PC-3 (cell line): ENCODE measurements at regions of chr12 and their contacts with region 1.

Region 1: GRCh38 chr12:15662303-15662980 is 126.7 kb downstream of the EPS8 start:
- DNase-seq: peak; percentile 91
- ATAC-seq: peak; percentile 94
- H3K4me3 ChIP-seq: no peak overlapping the region; the same call in 1 of the 2 replicates
- H3K27ac ChIP-seq: peak overlapping the region; percentile 97
- H3K4me1 ChIP-seq: peaks cover 30% of the 10 kb centered on the region
- H3K27me3 ChIP-seq: no peaks in the 10 kb centered on the region
- CTCF ChIP-seq: no peak

Region 2: GRCh38 chr12:15556411-15557102 is 105.9 kb before region 1 on chr12:
- CTCF ChIA-PET with region 1: no interaction called
- POLR2A ChIA-PET with region 1: interaction called, 17 read pairs
- intact Hi-C with region 1: no loop called
- DNase-seq: peak; percentile 5
- ATAC-seq: peak; percentile 63
- H3K4me3 ChIP-seq: no peak overlapping the region
- H3K27ac ChIP-seq: no peak overlapping the region
- H3K4me1 ChIP-seq: peaks cover 3% of the 10 kb centered on the region; the same call in 1 of the 2 replicates
- H3K27me3 ChIP-seq: no peaks in the 10 kb centered on the region
- CTCF ChIP-seq: no peak

Region 3: DNA sequence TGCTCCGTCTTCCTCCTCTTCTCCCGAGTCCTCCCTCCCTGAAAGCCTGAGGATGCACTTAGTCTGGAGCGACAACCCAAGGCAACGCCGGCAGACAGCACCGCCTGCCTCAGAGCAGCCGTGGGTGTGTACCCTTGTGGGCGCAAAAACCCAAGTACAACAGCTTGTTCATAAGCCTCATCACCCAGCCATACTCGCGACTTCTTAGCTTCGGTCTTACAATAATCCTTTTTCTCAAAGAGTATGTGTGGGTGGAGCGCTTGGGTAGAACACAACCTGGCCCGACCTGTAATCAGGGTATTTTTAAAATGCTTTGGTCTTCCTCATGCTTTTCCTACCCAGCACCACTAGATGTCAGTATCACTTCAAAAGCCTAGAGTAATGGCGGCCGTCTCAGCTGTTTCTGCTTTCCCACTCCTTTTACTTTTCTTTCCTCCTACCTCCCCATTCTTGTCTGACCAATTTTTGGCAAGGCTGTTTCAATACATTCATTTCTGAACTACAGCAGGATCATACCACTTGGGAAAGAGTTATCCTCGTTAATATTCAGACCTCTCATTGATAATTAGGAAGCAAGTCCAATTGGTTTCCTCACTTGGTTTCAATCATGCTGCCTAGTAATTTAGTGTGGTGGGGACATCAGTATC is 72.1 kb before region 1 on chr12:
- CTCF ChIA-PET with region 1: no interaction called
- POLR2A ChIA-PET with region 1: no interaction called
- intact Hi-C with region 1: loop called (anchors 5 kb)
- DNase-seq: peak; percentile 74
- ATAC-seq: peak; percentile 62
- H3K4me3 ChIP-seq: peak overlapping the region; percentile 67
- H3K27ac ChIP-seq: peak overlapping the region; percentile 75
- H3K4me1 ChIP-seq: peaks cover 30% of the 10 kb centered on the region
- H3K27me3 ChIP-seq: no peaks in the 10 kb centered on the region
- CTCF ChIP-seq: peak; percentile 85

Region 4: GRCh38 chr12:15644700-15645099 is 17.7 kb before region 1 on chr12:
- CTCF ChIA-PET with region 1: no interaction called
- POLR2A ChIA-PET with region 1: no interaction called
- intact Hi-C with region 1: loop called (anchors 2 kb)
- DNase-seq: peak; percentile 51
- ATAC-seq: peak; percentile 37; the same call in 1 of the 2 replicates
- H3K4me3 ChIP-seq: no peak overlapping the region
- H3K27ac ChIP-seq: 0 out of 2 replicates have a peak overlapping the region, but pooled peaks have one; percentile 39
- H3K4me1 ChIP-seq: peaks cover 17% of the 10 kb centered on the region
- H3K27me3 ChIP-seq: no peaks in the 10 kb centered on the region
- CTCF ChIP-seq: no peak

Region 5: GRCh38 chr12:15700595-15700994 is 38.2 kb after region 1 on chr12:
- CTCF ChIA-PET with region 1: no interaction called
- POLR2A ChIA-PET with region 1: no interaction called
- intact Hi-C with region 1: loop called (anchors 5 kb)
- DNase-seq: peak; percentile 79
- ATAC-seq: peak; percentile 78
- H3K4me3 ChIP-seq: no peak overlapping the region
- H3K27ac ChIP-seq: peak overlapping the region; percentile 86
- H3K4me1 ChIP-seq: peaks cover 33% of the 10 kb centered on the region
- H3K27me3 ChIP-seq: no peaks in the 10 kb centered on the region
- CTCF ChIP-seq: no peak

Region 6: GRCh38 chr12:15719230-15719629 is 56.8 kb after region 1 on chr12:
- CTCF ChIA-PET with region 1: no interaction called
- POLR2A ChIA-PET with region 1: no interaction called
- intact Hi-C with region 1: loop called (anchors 5 kb)
- DNase-seq: peak; percentile 34
- ATAC-seq: peak; percentile 75
- H3K4me3 ChIP-seq: no peak overlapping the region
- H3K27ac ChIP-seq: peak overlapping the region; percentile 85
- H3K4me1 ChIP-seq: peaks cover 40% of the 10 kb centered on the region
- H3K27me3 ChIP-seq: no peaks in the 10 kb centered on the region
- CTCF ChIP-seq: no peak

Region 7: DNA sequence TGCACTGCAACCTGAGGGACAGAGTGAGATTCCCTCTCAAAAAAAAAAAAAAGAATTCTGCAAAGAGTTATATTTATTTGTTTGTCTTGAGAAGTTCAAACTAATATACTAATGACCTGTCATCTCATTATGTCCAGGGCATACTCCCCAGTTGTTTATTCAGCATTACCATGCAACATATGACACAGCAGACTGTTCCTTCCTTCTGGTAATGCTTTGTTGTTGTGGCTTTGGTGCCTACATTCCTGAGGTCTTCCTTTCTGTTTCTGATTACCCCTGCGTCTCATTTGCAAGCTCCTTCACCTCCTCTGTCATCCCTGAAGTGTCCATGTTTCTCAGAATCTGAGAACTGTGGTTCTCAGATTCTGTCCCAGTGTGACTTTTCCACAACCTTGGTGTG is 304.0 kb after region 1 on chr12:
- CTCF ChIA-PET with region 1: no interaction called
- POLR2A ChIA-PET with region 1: no interaction called
- intact Hi-C with region 1: no loop called
- DNase-seq: peak; percentile 12
- ATAC-seq: no peak
- H3K4me3 ChIP-seq: no peak overlapping the region
- H3K27ac ChIP-seq: no peak overlapping the region
- H3K4me1 ChIP-seq: peaks cover 24% of the 10 kb centered on the region
- H3K27me3 ChIP-seq: no peaks in the 10 kb centered on the region
- CTCF ChIP-seq: no peak